ENCODE measurements at regions of chr17 and their contacts with region 1.

Region 1: GRCh38 chr17:37650419-37651003 is 7.3 kb upstream of the DDX52 start:
- DNase-seq: peak; percentile 67 to 76
- ATAC-seq: peak; percentile 78 to 91
- H3K4me3 ChIP-seq: no peak overlapping the region
- H3K27ac ChIP-seq: no peak overlapping the region
- H3K4me1 ChIP-seq: peaks cover 8% of the 10 kb centered on the region
- CTCF ChIP-seq: peak; percentile 90
- EP300 ChIP-seq: no peak
- POLR2A ChIP-seq: no peak
- RAD21 ChIP-seq: peak; percentile 92 to 95

Region 2: DNA sequence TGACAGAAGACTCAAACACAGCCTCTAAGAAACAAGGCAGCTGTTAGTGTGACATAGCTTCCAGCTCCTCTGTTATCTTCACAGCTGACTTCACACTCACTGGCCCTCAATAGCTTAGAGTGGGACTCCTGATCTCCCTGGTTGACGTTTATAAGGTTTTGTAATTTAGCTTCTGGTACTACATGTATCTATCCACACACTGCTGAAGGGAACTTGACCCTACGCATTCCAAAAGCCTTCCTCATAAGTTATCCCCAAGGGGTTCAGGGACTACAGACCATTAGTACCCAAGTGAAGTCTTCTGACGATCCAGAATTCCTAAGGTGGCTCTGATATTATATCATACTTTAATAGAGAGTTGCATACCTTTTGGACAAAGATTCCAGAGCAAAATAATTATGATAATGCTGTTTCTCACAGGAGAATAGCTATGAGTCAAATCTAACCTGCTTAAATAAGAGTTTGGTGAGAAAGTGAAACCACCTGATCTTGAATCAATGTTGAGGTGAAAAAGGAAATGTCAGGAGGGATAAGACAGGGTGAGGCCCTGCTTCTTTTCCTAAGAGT is 258.4 kb before region 1 on chr17:
- CTCF ChIA-PET with region 1: no interaction called
- POLR2A ChIA-PET with region 1: no interaction called
- DNase-seq: peak in 1 of 2 experiments; percentile 34
- ATAC-seq: peak; percentile 72
- H3K4me3 ChIP-seq: no peak overlapping the region
- H3K27ac ChIP-seq: no peak overlapping the region; a peak in 1 of 6 replicates
- H3K4me1 ChIP-seq: peaks cover 25% of the 10 kb centered on the region
- CTCF ChIP-seq: no peak
- EP300 ChIP-seq: no peak
- POLR2A ChIP-seq: no peak
- RAD21 ChIP-seq: no peak

Region 3: GRCh38 chr17:37541880-37542660 is 108.4 kb before region 1 on chr17:
- CTCF ChIA-PET with region 1: no interaction called
- POLR2A ChIA-PET with region 1: no interaction called
- DNase-seq: no peak
- ATAC-seq: no peak
- H3K4me3 ChIP-seq: no peak overlapping the region
- H3K27ac ChIP-seq: no peak overlapping the region; a peak in 1 of 6 replicates
- H3K4me1 ChIP-seq: peaks cover 7% of the 10 kb centered on the region; the same call in 2 of the 3 replicates
- CTCF ChIP-seq: no peak
- EP300 ChIP-seq: no peak
- POLR2A ChIP-seq: no peak
- RAD21 ChIP-seq: no peak

Region 4: DNA sequence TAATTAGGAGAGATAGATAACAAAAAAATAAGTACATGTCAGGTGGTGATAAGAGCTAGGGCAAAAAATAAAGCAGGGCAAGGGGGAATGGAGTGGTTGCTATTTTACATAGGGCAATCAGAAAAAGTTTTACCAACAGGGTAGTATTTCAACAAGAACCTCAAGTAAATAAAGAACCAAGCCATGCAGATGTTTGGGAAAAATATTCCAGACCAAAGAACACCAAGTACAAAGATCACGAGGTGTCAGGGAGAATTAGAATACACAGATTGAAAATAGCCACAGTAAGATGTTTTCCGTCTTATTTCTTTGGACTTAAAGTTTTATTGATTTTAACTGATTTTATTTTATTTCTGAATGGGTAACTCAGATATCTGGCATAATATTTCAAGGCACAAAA is 52.4 kb before region 1 on chr17:
- CTCF ChIA-PET with region 1: no interaction called
- POLR2A ChIA-PET with region 1: no interaction called
- DNase-seq: no peak
- ATAC-seq: no peak
- H3K4me3 ChIP-seq: no peak overlapping the region
- H3K27ac ChIP-seq: no peak overlapping the region
- H3K4me1 ChIP-seq: peaks cover 3% of the 10 kb centered on the region
- CTCF ChIP-seq: no peak
- EP300 ChIP-seq: no peak
- POLR2A ChIP-seq: no peak
- RAD21 ChIP-seq: no peak

Region 5: DNA sequence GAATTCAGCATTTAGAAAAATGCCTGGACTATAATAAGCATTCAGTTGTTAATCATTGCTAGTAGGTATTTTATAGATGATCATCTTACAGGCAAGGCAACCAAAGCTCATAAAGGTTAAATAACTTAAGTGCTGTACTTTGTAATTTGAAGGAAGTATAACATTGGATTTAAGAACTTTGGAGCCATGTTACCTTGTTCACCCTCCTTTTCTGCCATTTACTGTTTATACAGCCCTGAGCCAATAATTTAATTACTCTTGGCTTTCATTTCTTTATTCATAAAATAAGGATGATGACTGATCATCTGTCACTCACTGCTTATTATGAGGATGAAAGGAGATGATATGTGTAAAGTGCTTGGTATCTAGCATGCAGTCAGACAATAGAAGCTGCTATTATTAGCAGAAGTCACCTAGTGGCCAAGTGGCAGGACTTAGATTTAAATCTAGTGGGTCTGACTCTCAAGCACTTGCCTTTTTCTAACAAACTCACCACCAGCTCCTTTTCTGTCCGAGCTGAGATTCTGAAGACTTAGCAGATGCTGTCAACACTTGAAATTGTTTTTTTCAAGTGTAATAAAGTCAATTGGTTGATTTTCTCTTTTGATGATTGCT is 11.0 kb after region 1 on chr17:
- CTCF ChIA-PET with region 1: interaction called, 101 read pairs
- POLR2A ChIA-PET with region 1: no interaction called
- DNase-seq: peak; percentile 30 to 45
- ATAC-seq: peak; percentile 70 to 71
- H3K4me3 ChIP-seq: no peak overlapping the region
- H3K27ac ChIP-seq: no peak overlapping the region
- H3K4me1 ChIP-seq: no peaks in the 10 kb centered on the region
- CTCF ChIP-seq: no peak; the same call in 2 of the 3 replicates
- EP300 ChIP-seq: no peak
- POLR2A ChIP-seq: no peak
- RAD21 ChIP-seq: no peak

Region 6: GRCh38 chr17:37701496-37701898 is 51.0 kb after region 1 on chr17:
- CTCF ChIA-PET with region 1: interaction called, 61 read pairs
- POLR2A ChIA-PET with region 1: no interaction called
- DNase-seq: peak; percentile 50 to 75
- ATAC-seq: peak; percentile 67 to 84; a peak in 5 of 6 replicates
- H3K4me3 ChIP-seq: no peak overlapping the region
- H3K27ac ChIP-seq: peak overlapping the region; percentile 72 to 78
- H3K4me1 ChIP-seq: peaks cover 48% of the 10 kb centered on the region
- CTCF ChIP-seq: peak; percentile 94
- EP300 ChIP-seq: no peak
- POLR2A ChIP-seq: no peak
- RAD21 ChIP-seq: peak; percentile 82 to 85

Region 7: GRCh38 chr17:37725601-37726146 is 75.2 kb after region 1 on chr17:
- CTCF ChIA-PET with region 1: interaction called, 10 read pairs
- POLR2A ChIA-PET with region 1: no interaction called
- DNase-seq: no peak
- ATAC-seq: no peak
- H3K4me3 ChIP-seq: no peak overlapping the region
- H3K27ac ChIP-seq: peak overlapping the region in 1 of 2 experiments; percentile 28; a peak in 2 of 6 replicates
- H3K4me1 ChIP-seq: peaks cover 8% of the 10 kb centered on the region
- CTCF ChIP-seq: no peak
- EP300 ChIP-seq: no peak
- POLR2A ChIP-seq: no peak
- RAD21 ChIP-seq: no peak

Region 8: GRCh38 chr17:37761059-37761458 is 110.5 kb after region 1 on chr17:
- CTCF ChIA-PET with region 1: interaction called, 29 read pairs
- POLR2A ChIA-PET with region 1: no interaction called
- DNase-seq: no peak
- ATAC-seq: no peak
- H3K4me3 ChIP-seq: no peak overlapping the region
- H3K27ac ChIP-seq: no peak overlapping the region
- H3K4me1 ChIP-seq: peaks cover 24% of the 10 kb centered on the region
- CTCF ChIP-seq: no peak
- EP300 ChIP-seq: no peak
- POLR2A ChIP-seq: no peak
- RAD21 ChIP-seq: no peak

Region 9: GRCh38 chr17:37791447-37792399 is 141.2 kb after region 1 on chr17:
- CTCF ChIA-PET with region 1: interaction called, 27 read pairs
- POLR2A ChIA-PET with region 1: no interaction called
- DNase-seq: peak; percentile 35 to 80
- ATAC-seq: peak in 1 of 2 experiments; percentile 67; a peak in 3 of 6 replicates
- H3K4me3 ChIP-seq: no peak overlapping the region
- H3K27ac ChIP-seq: peak overlapping the region in 1 of 2 experiments; percentile 21; a peak in 2 of 6 replicates
- H3K4me1 ChIP-seq: peaks cover 29% of the 10 kb centered on the region
- CTCF ChIP-seq: peak; percentile 83
- EP300 ChIP-seq: no peak
- POLR2A ChIP-seq: no peak
- RAD21 ChIP-seq: peak; percentile 72 to 79

Region 10: DNA sequence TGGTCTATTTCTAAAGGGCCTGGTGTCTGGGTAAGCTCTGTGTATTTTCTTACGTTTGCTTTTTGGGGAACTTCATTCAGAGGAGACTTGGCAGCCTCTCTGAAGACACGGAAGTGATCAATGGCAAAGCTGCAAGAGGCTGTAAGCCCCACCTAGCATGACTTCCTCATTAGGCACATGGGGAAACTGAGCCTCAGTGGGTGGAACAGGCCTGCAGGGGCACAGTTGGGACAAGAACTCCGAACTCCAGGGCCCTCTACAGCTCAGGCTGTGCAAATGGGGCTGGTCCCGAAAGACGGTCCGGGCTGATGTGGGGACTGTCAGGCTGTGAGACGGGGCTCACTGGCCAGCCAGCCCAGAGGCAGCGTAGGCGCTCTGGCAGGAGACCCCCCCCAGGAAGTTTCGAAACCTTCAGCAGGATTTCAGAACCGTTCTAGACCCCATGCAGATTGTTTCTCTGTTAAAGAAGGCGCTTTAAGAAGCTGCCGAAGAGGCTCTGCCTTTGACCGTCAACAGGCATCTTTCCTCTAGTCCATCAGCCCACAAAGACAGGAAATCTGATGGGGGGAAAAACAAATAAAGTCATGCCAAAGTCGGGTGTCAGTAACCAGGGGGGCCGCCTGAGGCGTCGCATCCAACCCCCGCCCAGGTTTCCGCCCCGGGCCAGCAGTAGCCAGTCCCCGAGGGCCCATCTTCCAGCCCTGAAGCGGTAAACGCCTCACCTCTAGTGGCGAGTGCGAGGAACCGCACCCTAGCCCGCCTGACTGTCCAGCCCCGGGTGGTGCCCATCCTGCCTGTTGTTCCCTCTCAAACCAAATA is 193.9 kb after region 1 on chr17:
- CTCF ChIA-PET with region 1: interaction called, 15 read pairs
- POLR2A ChIA-PET with region 1: no interaction called
- DNase-seq: peak; percentile 71 to 87
- ATAC-seq: peak; percentile 96 to 99
- H3K4me3 ChIP-seq: no peak overlapping the region
- H3K27ac ChIP-seq: peak overlapping the region in 1 of 2 experiments; percentile 24; a peak in 3 of 6 replicates
- H3K4me1 ChIP-seq: peaks cover 16% of the 10 kb centered on the region; the same call in 2 of the 3 replicates
- CTCF ChIP-seq: peak; percentile 82
- EP300 ChIP-seq: no peak
- POLR2A ChIP-seq: no peak
- RAD21 ChIP-seq: peak; percentile 90 to 93

Measured in A549 (cell line).